ENCODE measurements at regions of chr2 and their contacts with region 1.

Region 1: DNA sequence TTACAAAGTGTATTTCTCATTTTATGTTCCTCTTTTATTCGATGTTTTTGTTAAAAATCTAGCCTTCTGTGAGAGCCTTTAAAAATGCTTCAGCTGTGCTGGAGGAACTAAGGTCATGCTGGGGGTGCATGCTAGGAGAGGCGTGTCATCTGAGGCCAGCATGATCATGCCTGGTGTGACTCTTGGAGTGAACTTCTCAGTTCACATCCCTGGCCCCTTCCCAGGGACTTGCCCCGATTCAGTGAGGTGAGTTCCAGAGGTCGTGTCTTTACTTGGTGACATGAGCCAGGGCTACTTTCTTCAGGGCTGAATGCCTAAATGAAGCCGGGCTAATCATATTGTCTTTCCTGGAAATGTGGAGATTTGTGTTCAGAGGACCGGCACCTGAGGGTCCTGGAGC is 264.9 kb downstream of the MREG start:
- DNase-seq: peak; percentile 64
- ATAC-seq: peak; percentile 84

Region 2: DNA sequence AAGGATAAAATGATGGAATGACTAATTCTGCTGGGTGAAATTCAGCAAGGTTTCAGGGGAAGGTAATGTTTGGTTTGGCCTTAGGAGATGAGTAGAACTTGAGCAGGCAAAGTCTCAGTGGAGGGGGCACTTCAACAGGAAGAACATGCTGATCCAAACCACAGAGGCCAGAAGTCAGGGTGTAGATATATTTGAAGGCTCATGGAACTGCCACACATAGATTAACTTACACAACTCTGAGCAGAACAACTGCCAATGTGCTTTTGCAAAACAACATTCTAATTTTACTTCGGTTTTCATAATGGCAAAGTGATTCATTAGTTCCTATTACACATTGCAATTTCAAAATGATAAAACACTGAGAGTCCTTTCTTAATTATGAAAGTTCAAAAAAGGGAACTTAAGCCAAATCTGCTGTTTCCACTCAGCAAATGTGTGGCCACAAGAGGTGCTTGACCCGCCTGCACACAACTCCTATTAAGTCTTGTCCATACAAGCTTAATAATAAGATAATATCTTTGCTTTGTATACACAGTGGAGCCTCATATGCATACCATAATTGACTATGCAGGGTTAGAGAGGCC is 19.9 kb before region 1 on chr2:
- intact Hi-C with region 1: loop called (anchors 1 kb)
- DNase-seq: no peak
- ATAC-seq: peak; percentile 93

Region 3: GRCh38 chr2:215843579-215843978 is 95.1 kb after region 1 on chr2:
- intact Hi-C with region 1: no loop called
- DNase-seq: no peak
- ATAC-seq: peak; percentile 51

Region 4: GRCh38 chr2:215931256-215931903 is 182.9 kb after region 1 on chr2:
- intact Hi-C with region 1: no loop called
- DNase-seq: peak; percentile 71
- ATAC-seq: peak; percentile 93

Region 5: DNA sequence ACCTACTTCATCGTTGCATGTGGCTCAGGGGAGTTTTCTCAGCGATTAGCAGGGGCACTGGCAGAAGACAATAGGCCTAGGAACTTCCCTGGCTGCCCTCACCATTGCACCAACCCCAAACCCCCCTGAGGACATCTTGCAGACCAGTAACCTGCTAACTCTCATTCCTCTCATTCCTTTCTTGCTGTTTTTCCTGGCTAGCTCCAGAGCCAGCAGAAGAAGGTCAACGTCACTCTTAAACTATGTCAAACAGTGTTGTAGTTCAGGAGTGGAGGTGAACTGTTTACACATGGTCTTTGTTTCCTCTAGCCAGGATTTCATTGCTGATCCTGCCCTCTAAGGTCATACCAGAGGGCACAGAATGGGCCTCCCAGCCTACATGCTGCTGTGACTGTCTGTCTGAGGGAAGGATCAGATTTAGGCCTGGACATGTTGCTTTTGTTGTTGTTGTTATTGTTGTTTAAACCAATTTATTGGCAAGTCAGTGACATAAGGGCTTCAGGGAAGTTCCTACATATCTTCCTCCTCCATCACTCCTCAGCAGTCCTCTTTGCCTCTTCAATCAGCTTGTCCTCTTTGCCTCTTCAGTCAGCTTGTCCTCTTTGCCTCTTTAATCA is 1583.2 kb after region 1 on chr2:
- intact Hi-C with region 1: no loop called
- DNase-seq: no peak
- ATAC-seq: peak; percentile 72

Region 6: DNA sequence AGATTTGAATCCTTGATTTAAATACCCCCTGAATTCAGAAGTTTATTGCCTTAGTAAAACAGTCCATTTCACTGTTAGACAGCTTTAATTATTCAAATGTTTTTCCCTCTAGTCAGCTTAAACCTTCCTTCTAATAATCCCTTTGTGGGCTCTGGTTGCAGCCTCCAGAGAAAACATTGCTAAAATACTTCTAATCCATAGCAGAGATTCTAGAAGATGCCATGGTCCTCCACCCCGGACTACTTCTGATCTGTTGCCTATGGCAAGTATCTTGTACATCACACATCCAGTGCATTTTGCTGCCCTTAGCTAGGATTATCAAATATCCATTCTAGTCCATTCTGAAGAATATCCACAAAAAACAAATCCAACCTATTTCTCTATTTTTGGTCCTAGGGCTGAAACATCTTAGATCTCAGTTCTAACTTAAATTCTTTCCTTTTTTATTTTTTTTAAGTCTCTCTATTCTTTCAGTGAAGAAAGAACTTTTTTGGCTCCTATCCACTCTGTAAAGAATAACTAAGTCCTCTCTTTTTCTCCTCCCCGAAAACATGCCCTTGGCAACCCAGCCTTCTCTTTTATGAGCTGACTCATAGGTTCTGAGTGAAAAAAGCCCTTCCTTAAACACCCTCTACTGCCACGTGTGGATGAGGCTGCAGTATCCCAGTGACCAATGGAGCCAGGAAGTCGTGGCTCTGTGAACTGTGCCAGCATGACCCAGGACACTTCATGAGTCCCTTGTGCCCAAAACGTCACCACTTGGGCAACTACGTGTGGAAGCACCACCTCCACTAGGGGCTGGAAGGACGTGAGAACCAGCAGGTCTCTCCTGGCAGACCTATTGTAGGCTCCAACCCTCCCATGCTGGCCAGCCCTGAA is 1904.6 kb after region 1 on chr2:
- intact Hi-C with region 1: no loop called
- DNase-seq: peak; percentile 79
- ATAC-seq: peak; percentile 95

Measured in sciatic nerve (tissue), 2 donors.